GM12878 (cell line): ENCODE measurements at regions of chr2 and their contacts with region 1.

Region 1: GRCh38 chr2:192669505-192670091 is 474.9 kb upstream of the TMEFF2 start:
- DNase-seq: no peak
- ATAC-seq: no peak; the same call in none of the 3 replicates
- H3K4me3 ChIP-seq: no peak overlapping the region
- H3K27ac ChIP-seq: no peak overlapping the region
- H3K4me1 ChIP-seq: no peaks in the 10 kb centered on the region
- H3K27me3 ChIP-seq: no peaks in the 10 kb centered on the region
- CTCF ChIP-seq: no peak
- EP300 ChIP-seq: no peak
- POLR2A ChIP-seq: no peak
- RAD21 ChIP-seq: no peak

Region 2: DNA sequence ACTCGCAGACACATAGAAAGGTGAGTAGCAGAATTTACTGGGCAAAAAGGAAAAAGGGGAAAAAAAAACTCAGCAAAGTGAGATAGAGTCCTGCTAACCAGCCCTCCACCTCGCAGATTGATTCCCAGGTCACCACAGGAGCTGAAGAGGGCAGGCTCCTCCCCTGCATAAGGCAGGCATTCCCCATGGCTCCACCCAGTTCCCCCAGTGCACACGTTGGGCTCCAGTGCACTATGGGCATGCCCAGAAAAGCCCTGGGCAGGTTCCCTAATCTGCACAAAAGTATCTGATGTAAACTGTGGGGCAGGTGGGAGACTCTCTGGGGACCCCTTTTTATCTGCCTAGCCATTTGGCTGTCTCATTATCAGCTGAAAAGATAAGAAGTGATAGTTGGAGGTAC is 13.7 kb before region 1 on chr2:
- CTCF ChIA-PET with region 1: no interaction called
- POLR2A ChIA-PET with region 1: no interaction called
- RAD21 ChIA-PET with region 1: no interaction called
- SMC1A ChIA-PET with region 1: interaction called, 11 read pairs
- in situ Hi-C with region 1: no loop called
- intact Hi-C with region 1: no loop called
- DNase-seq: no peak
- ATAC-seq: peak; percentile 64
- H3K4me3 ChIP-seq: no peak overlapping the region
- H3K27ac ChIP-seq: no peak overlapping the region
- H3K4me1 ChIP-seq: no peaks in the 10 kb centered on the region
- H3K27me3 ChIP-seq: no peaks in the 10 kb centered on the region
- CTCF ChIP-seq: no peak
- EP300 ChIP-seq: no peak
- POLR2A ChIP-seq: no peak
- RAD21 ChIP-seq: no peak

Region 3: DNA sequence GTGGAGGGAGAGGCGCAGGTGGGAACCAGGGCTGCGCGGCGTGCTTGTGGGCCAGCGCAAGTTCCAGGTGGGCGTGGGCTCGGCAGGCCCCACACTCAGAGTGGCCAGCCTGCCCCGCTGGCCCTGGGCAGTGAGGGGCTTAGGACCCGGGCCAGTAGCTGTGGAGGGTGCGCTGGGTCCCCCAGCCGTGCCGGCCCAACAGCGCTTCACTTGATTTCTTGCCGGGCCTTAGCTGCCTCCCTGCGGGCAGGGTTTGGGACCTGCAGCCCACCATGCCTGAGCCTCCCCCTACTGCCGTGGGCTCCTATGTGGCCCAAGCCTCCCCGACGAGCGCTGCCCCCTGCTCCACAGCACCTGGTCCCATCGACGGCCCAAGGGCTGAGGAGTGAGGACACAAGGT is 1350.6 kb after region 1 on chr2:
- CTCF ChIA-PET with region 1: no interaction called
- POLR2A ChIA-PET with region 1: no interaction called
- RAD21 ChIA-PET with region 1: no interaction called
- SMC1A ChIA-PET with region 1: no interaction called
- in situ Hi-C with region 1: no loop called
- intact Hi-C with region 1: no loop called
- DNase-seq: no peak
- ATAC-seq: no peak
- H3K4me3 ChIP-seq: no peak overlapping the region
- H3K27ac ChIP-seq: no peak overlapping the region
- H3K4me1 ChIP-seq: no peaks in the 10 kb centered on the region
- H3K27me3 ChIP-seq: no peaks in the 10 kb centered on the region
- CTCF ChIP-seq: no peak
- EP300 ChIP-seq: no peak
- POLR2A ChIP-seq: no peak
- RAD21 ChIP-seq: no peak